ENCODE measurements at regions of chr6 and their contacts with region 1.

Region 1: DNA sequence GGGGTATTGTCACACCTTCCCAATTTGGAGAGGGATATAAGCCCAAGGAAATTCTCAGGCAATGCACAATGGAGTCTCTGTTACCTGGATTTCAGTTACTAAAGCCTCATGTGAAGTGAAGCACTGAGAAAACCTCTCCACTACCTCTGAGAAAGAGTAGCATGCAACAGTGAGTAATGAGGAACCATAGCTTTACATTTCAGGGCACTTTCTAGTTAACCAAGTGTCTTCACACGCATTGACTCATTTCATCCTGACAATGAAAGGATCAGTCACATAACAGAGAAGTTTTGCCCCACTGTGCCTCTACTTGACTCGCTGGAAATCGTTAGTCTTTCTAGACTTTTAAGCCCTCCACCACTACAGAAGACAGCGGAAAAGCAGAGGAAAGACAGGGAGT is 86.2 kb upstream of the ARID1B start:
- DNase-seq: no peak
- H3K4me3 ChIP-seq: no peak overlapping the region
- H3K27ac ChIP-seq: no peak overlapping the region
- H3K4me1 ChIP-seq: peaks cover 7 to 12% (median 9%) of the 10 kb centered on the region in 4 donors
- H3K27me3 ChIP-seq: no peaks in the 10 kb centered on the region
- CTCF ChIP-seq: no peak
- EP300 ChIP-seq: no peak
- POLR2A ChIP-seq: no peak

Region 2: GRCh38 chr6:156774863-156775405 is 83.9 kb after region 1 on chr6:
- intact Hi-C with region 1: loop called (anchors 5 kb)
- DNase-seq: peak in 1 of 2 donors; percentile 49
- H3K4me3 ChIP-seq: no peak overlapping the region
- H3K27ac ChIP-seq: peak overlapping the region in 3 of 5 donors; percentile 98 to 100 (median 99)
- H3K4me1 ChIP-seq: peaks cover 10 to 32% (median 20%) of the 10 kb centered on the region in 4 donors
- H3K27me3 ChIP-seq: no peaks in the 10 kb centered on the region
- CTCF ChIP-seq: no peak
- EP300 ChIP-seq: no peak
- POLR2A ChIP-seq: no peak

Measured in stomach (tissue), 19 donors.